ENCODE measurements at regions of chr14 and their contacts with region 1.

Region 1: GRCh38 chr14:67599698-67600561 is at the start of gene PIGH:
- DNase-seq: peak; percentile 46 to 95
- H3K4me3 ChIP-seq: peak within 1 kb of the TSS; percentile 60 to 79 (median 70)
- H3K27ac ChIP-seq: no peak within 1 kb of the TSS
- H3K4me1 ChIP-seq: no peaks in the 10 kb centered on the region; a peak in 1 of 7 replicates
- H3K27me3 ChIP-seq: peaks cover 4 to 41% (median 22%) of the 10 kb centered on the region in 4 experiments
- CTCF ChIP-seq: peak; percentile 53 to 97 (median 66)
- EP300 ChIP-seq: no peak
- POLR2A ChIP-seq: peak in 1 of 2 experiments; percentile 59; a peak in 2 of 3 replicates
- RAD21 ChIP-seq: peak; percentile 37 to 51; a peak in 3 of 4 replicates
- total RNA-seq, gene PIGH: 6.2 and 7.2 TPM in 2 replicates

Region 2: GRCh38 chr14:67449096-67449495 is 150.8 kb before region 1 on chr14:
- CTCF ChIA-PET with region 1: no interaction called
- POLR2A ChIA-PET with region 1: no interaction called
- DNase-seq: no peak
- H3K4me3 ChIP-seq: no peak overlapping the region; a peak in 1 of 8 replicates
- H3K27ac ChIP-seq: no peak overlapping the region
- H3K4me1 ChIP-seq: peaks cover 0 to 19% (median 8%) of the 10 kb centered on the region in 4 experiments; a peak in 6 of 7 replicates
- H3K27me3 ChIP-seq: no peaks in the 10 kb centered on the region; a peak in 1 of 7 replicates
- CTCF ChIP-seq: no peak
- EP300 ChIP-seq: no peak
- POLR2A ChIP-seq: no peak
- RAD21 ChIP-seq: no peak

Region 3: DNA sequence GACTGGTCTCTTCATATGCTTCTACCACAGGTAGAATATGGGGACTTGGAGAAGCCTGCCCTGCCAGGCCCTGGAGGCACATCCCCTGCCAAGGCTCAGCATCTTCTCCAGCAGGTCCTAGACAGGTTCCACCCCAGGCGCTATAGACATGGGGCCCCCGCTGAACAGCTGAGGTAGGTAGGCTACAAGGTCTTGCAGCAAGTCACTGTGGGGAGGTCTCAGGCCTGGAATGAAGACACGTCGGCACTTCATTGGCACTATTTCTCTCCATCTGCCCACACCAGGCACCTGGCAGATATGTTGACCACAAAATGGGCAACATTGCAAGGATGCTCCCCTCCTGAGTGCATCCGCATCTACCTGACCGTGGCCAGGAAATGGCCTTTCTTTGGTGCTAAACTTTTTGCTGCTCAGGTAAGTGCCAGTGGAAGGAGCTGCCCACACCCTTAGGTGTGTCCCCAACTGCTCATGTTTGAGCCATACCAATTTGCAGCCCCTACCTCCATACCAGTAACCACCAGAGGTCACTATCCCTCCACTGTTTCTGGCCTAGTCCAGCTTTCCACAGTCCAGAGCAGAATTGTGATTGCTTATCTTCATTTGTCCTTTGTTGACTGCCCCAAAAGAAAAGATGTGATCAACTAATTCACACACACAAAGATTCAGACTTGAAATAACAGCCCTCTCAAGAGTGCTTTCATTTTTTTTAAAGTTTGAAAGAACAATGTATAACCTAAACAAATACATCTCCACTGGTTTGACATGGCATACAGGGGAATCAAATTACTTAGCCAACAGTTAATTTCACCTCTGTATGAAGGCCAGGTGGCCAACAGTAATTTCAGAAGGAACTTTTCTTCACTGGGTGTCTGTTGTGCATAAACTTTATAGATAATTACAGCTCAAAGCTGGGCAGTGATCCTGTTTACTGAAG is 16.0 kb before region 1 on chr14:
- CTCF ChIA-PET with region 1: interaction called, 28 read pairs
- POLR2A ChIA-PET with region 1: interaction called, 4 read pairs
- DNase-seq: no peak
- H3K4me3 ChIP-seq: no peak overlapping the region
- H3K27ac ChIP-seq: no peak overlapping the region
- H3K4me1 ChIP-seq: no peaks in the 10 kb centered on the region
- H3K27me3 ChIP-seq: no peaks in the 10 kb centered on the region
- CTCF ChIP-seq: peak; percentile 54 to 83 (median 80)
- EP300 ChIP-seq: no peak
- POLR2A ChIP-seq: no peak
- RAD21 ChIP-seq: peak; percentile 89 to 90

Region 4: DNA sequence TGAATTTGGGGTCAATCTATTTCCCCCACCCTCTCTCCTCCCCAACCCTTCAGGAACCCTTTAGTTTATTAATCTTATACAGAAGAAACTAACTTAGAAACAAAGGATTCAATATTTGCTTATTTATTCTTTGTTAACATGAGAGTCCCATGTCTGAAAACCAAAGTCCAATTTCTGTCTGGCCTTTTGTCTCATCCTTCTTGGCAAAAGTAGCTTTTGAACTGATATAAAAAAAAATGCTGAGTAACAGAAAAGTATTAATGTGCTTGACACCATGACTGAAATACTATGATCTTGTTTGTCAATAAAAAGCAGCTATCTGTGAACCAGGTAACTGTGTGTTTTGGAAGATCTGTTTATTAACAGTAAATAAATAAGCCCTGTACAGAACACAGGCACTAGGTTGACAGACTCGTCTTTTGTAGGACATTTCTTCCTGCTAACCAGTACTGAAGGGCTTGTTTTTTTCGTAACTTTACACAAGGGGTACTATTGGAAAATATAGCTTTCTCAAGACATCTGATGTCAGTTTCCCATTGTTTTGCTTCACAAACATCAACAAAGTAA is 10.6 kb before region 1 on chr14:
- CTCF ChIA-PET with region 1: interaction called, 28 read pairs
- POLR2A ChIA-PET with region 1: interaction called, 3 read pairs
- DNase-seq: no peak
- H3K4me3 ChIP-seq: no peak overlapping the region
- H3K27ac ChIP-seq: no peak overlapping the region
- H3K4me1 ChIP-seq: no peaks in the 10 kb centered on the region
- H3K27me3 ChIP-seq: no peaks in the 10 kb centered on the region
- CTCF ChIP-seq: no peak
- EP300 ChIP-seq: no peak
- POLR2A ChIP-seq: no peak
- RAD21 ChIP-seq: no peak

Region 5: DNA sequence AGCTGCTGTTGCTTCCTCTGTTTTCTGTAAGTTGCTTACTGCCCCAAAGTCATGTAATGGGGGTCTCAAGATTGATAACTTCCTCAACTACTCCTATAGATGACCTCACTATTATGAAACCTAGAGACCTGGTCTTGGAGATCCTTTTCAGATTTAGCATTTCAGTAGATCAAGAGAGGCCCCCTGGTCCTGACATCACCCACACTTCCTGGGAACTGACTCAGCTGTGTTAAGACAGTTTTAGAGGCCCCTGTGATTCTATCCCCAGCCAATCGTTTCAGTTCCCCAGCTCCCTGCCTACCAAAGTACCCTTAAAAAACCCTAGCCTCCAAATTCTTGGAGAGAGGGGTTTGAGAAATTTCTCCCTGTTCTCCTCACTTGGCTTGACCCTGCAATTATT is 10.6 kb after region 1 on chr14:
- CTCF ChIA-PET with region 1: interaction called, 11 read pairs
- POLR2A ChIA-PET with region 1: interaction called, 8 read pairs
- DNase-seq: no peak
- H3K4me3 ChIP-seq: no peak overlapping the region
- H3K27ac ChIP-seq: no peak overlapping the region
- H3K4me1 ChIP-seq: peaks cover 0 to 8% (median 2%) of the 10 kb centered on the region in 4 experiments; a peak in 4 of 7 replicates
- H3K27me3 ChIP-seq: peaks cover 17 to 73% (median 55%) of the 10 kb centered on the region in 4 experiments
- CTCF ChIP-seq: no peak
- EP300 ChIP-seq: no peak
- POLR2A ChIP-seq: no peak
- RAD21 ChIP-seq: no peak

Region 6: DNA sequence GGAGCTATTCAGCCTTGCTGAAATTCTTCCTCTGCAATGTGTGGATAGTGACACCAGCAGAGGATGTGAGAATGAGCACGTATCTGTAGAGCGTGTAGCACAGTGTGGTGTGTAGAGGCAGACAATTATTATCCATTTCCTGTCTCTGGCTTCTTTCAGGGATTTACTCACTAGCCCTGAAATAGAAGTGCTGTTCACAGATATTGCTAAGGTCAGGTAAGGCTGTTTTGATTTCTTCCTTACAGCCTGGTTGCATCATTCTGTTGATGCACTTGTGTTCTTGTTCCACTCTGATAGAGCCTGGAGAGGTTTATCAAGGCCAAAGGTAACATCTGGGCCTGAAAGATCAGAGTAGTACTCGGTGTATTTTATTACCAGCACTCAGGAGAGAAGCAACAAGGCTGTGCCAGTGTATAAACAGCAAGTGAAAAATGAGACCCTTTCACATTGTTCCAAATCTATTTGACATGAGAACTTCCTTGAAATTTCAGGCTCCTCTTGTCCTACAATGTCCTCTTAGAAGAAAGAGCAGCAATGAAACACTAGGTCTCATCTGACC is 36.5 kb after region 1 on chr14:
- CTCF ChIA-PET with region 1: no interaction called
- POLR2A ChIA-PET with region 1: no interaction called
- DNase-seq: no peak
- H3K4me3 ChIP-seq: no peak overlapping the region
- H3K27ac ChIP-seq: no peak overlapping the region
- H3K4me1 ChIP-seq: no peaks in the 10 kb centered on the region
- H3K27me3 ChIP-seq: no peaks in the 10 kb centered on the region
- CTCF ChIP-seq: no peak
- EP300 ChIP-seq: no peak
- POLR2A ChIP-seq: no peak
- RAD21 ChIP-seq: no peak

Region 7: GRCh38 chr14:67674481-67675169 is 74.7 kb after region 1 on chr14 and contains the start of gene VTI1B:
- CTCF ChIA-PET with region 1: interaction called, 4 read pairs
- POLR2A ChIA-PET with region 1: interaction called, 12 read pairs
- DNase-seq: peak in 1 of 2 experiments; percentile 89
- H3K4me3 ChIP-seq: peak within 1 kb of the TSS; percentile 77 to 96 (median 80)
- H3K27ac ChIP-seq: peak within 1 kb of the TSS; percentile 99
- H3K4me1 ChIP-seq: no peaks in the 10 kb centered on the region; a peak in 2 of 7 replicates
- H3K27me3 ChIP-seq: no peaks in the 10 kb centered on the region
- CTCF ChIP-seq: peak in 1 of 3 experiments; percentile 9; a peak in 1 of 4 replicates
- EP300 ChIP-seq: no peak
- POLR2A ChIP-seq: peak; percentile 63 to 83
- RAD21 ChIP-seq: no peak
- total RNA-seq, gene VTI1B: 98.7 and 104 TPM in 2 replicates

Measured in H1 (cell line).